Uterus (tissue), 4 donors: ENCODE measurements at regions of chr5 and their contacts with region 1.

Region 1: GRCh38 chr5:67301285-67301903 is 104.8 kb upstream of the CD180 start:
- DNase-seq: peak; percentile 83 to 93
- H3K4me3 ChIP-seq: no peak overlapping the region
- H3K27ac ChIP-seq: peak overlapping the region; percentile 91 to 94
- H3K4me1 ChIP-seq: peaks cover 6 to 9% of the 10 kb centered on the region in 2 donors
- H3K27me3 ChIP-seq: no peaks in the 10 kb centered on the region
- CTCF ChIP-seq: no peak
- POLR2A ChIP-seq: no peak

Region 2: DNA sequence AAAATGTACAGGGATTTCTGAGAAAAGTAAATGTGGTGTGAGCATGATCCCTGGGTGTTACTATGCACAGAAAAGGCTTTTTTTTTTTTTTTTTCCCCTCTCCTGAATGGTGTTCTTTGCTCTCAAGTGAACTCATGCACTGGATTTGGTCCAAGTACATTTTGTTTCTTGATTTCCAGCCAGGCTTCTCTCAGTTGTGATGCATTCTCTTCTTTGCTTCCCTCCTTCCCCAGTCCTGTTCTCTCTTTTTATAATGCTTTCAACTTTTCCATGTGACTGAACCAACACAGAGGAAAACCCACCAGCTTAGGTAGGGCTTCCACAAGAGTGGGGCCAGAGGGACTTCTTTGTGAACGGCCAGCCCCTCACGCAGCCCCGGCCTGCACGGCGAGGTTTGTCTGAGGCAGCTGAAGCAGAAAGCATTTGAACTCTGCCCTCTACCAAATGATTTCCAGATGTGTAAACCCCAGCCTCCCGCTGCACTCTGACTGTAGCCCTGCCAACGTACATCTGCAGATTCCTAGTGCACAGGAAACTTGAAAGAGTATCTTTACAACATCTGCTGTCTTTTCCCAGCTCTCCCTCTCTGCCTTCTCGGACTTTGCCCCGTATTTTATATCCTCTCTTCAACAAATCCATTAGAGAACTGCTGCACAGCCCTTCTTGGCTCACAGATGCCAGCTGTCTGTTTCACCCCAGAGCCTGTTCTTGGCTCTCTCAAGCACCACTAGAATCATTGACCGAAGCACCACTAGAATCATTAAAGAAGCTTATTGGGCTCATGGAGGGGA is 33.0 kb before region 1 on chr5:
- intact Hi-C with region 1: loop called (anchors 5 kb)
- DNase-seq: peak; percentile 83 to 93
- H3K4me3 ChIP-seq: peak overlapping the region in 1 of 2 donors; percentile 10
- H3K27ac ChIP-seq: peak overlapping the region; percentile 92 to 96
- H3K4me1 ChIP-seq: peaks cover 19 to 23% of the 10 kb centered on the region in 2 donors
- H3K27me3 ChIP-seq: no peaks in the 10 kb centered on the region
- CTCF ChIP-seq: no peak
- POLR2A ChIP-seq: peak in 1 of 2 donors; percentile 30

Region 3: DNA sequence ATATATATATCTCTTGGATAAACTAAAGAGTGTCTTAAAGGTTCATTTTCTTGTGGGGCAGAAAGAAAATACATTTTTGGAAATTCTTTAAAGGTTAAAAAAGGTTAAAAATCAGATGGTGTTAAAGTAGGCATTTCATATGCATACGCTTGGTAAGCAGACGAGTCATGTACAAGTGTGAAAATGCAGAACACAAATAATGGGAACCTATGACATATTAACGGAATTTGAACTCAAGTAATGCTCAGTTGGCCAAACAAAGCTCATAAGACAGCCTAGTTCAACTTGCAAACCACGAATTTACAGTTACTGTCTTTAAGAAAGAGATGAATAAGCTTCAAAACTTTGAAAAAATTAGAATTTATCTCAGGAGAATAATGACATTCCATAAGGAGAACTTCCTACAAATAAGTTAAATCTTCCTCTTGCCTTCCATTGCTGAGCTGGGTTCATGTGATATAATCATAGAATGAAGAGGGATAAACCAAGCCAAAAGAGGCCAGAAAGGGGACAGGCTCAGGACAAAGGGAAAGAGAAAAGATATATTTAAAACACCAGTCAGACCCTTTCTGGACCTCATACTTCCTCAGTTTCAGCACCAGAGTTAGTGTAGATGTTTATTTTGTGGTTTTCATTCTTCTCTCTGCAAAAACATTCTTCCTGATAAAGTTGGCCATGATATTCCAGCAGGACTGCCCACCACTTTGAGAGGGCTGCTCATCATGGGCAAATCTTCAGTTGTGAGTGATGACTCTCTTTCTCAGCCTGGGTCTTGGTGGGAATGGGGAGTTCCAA is 151.9 kb after region 1 on chr5:
- intact Hi-C with region 1: no loop called
- DNase-seq: no peak
- H3K4me3 ChIP-seq: no peak overlapping the region
- H3K27ac ChIP-seq: no peak overlapping the region
- H3K4me1 ChIP-seq: no peaks in the 10 kb centered on the region
- H3K27me3 ChIP-seq: no peaks in the 10 kb centered on the region
- CTCF ChIP-seq: no peak
- POLR2A ChIP-seq: no peak

Region 4: DNA sequence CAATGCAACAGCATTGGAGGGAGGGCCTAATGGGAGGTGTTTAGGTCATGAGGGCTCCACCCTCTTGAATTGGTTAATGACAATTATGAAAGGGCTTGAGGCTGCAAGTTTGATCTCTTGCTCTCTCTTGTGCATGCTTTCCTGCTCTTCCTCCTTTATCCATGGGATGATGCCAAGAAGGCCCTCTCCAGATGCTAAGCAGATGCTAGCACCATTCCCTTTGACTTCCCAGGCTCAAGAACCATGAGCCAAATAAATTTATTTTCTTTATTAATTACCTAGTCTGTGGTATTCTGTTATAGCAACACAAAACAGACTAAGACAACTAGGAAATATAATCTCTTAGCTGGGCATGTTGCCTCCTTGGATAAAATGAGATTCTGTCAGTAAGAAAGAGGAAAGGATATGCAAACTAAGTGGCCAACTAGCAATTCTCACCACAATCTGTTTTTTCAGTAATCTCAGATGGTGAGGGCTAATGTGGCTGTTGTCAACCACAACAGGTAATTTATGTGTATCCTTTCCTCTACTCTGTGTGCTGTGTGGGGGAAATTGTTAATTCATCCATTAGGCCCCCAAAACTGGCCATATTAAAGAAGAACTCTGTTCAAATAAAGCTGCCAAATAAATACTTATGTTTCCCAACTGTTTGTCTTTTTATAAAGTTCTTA is 164.3 kb after region 1 on chr5:
- intact Hi-C with region 1: no loop called
- DNase-seq: peak in 1 of 2 donors; percentile 16
- H3K4me3 ChIP-seq: no peak overlapping the region
- H3K27ac ChIP-seq: no peak overlapping the region
- H3K4me1 ChIP-seq: no peaks in the 10 kb centered on the region
- H3K27me3 ChIP-seq: no peaks in the 10 kb centered on the region
- CTCF ChIP-seq: no peak
- POLR2A ChIP-seq: no peak